Activated CD4-positive, alpha-beta memory T cell treated with anti-CD3 and anti-CD28 coated beads for 36 hours (primary cell): ENCODE measurements at regions of chr2 and their contacts with region 1.

Region 1: GRCh38 chr2:60806988-60807681 is 51.1 kb downstream of the PAPOLG start:
- DNase-seq: peak; percentile 81
- H3K4me3 Mint-ChIP-seq: peak overlapping the region; percentile 36
- H3K27ac Mint-ChIP-seq: peak overlapping the region; percentile 88
- H3K4me1 Mint-ChIP-seq: peaks cover 49% of the 10 kb centered on the region
- H3K27me3 Mint-ChIP-seq: no peaks in the 10 kb centered on the region

Region 2: GRCh38 chr2:60555066-60555782 is 251.9 kb before region 1 on chr2:
- CTCF ChIA-PET with region 1: no interaction called
- POLR2A ChIA-PET with region 1: no interaction called
- intact Hi-C with region 1: no loop called
- DNase-seq: peak; percentile 72
- H3K4me3 Mint-ChIP-seq: peak overlapping the region; percentile 70
- H3K27ac Mint-ChIP-seq: no peak overlapping the region
- H3K4me1 Mint-ChIP-seq: peaks cover 38% of the 10 kb centered on the region
- H3K27me3 Mint-ChIP-seq: peaks cover 51% of the 10 kb centered on the region

Region 3: GRCh38 chr2:60707750-60708371 is 99.3 kb before region 1 on chr2:
- CTCF ChIA-PET with region 1: no interaction called
- POLR2A ChIA-PET with region 1: no interaction called
- intact Hi-C with region 1: loop called (anchors 5 kb)
- DNase-seq: no peak
- H3K4me3 Mint-ChIP-seq: no peak overlapping the region
- H3K27ac Mint-ChIP-seq: no peak overlapping the region
- H3K4me1 Mint-ChIP-seq: no peaks in the 10 kb centered on the region
- H3K27me3 Mint-ChIP-seq: peaks cover 1% of the 10 kb centered on the region

Region 4: DNA sequence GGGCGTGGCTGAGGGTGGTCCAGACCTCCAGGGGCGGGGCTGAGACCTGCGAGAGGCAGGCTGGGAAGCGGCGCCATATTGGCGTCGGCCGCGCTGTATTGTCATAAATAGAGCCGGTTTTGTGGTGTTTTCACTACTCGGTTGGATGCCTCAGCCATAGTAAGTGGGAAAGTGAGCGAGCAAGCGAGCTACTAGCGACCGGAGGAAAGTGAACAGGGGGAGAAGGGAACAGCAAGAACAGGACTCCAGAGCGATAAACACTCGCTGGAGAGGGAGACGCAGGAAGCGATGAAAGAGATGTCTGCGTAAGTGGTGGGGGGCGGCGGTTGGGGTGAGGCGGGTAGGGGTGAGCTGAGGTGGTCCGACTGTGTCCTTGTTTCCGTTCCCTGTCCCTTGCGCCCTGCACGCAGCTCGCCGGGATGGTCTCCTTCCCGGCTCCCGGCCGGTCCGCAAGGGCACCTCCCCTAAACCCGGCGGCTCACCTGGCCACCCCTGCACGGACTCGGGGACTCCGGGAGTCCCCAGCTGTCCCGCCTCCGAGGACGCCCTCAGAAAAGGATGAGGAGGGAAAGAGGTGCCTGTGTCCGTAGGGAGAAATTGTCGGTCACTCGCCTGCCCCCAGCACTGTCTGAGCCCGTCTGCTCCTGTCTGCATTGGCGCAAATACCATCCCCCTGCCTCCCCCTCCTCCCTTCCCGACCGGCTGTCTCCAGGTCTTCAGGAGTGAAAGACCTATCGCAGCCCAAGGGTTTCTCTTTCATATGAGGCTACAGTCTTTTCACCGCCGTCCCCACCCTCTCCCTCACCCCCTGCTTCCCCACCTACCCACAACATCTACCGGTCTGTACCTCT is 50.7 kb before region 1 on chr2 and contains the start of gene PAPOLG:
- CTCF ChIA-PET with region 1: interaction called, 3 read pairs
- POLR2A ChIA-PET with region 1: interaction called, 3 read pairs
- intact Hi-C with region 1: loop called (anchors 5 kb)
- DNase-seq: peak; percentile 98
- H3K4me3 Mint-ChIP-seq: peak within 1 kb of the TSS; percentile 99
- H3K27ac Mint-ChIP-seq: peak within 1 kb of the TSS; percentile 96
- H3K4me1 Mint-ChIP-seq: peaks cover 39% of the 10 kb centered on the region
- H3K27me3 Mint-ChIP-seq: no peaks in the 10 kb centered on the region
- total RNA-seq, gene PAPOLG: 14.4 to 15.7 TPM

Region 5: DNA sequence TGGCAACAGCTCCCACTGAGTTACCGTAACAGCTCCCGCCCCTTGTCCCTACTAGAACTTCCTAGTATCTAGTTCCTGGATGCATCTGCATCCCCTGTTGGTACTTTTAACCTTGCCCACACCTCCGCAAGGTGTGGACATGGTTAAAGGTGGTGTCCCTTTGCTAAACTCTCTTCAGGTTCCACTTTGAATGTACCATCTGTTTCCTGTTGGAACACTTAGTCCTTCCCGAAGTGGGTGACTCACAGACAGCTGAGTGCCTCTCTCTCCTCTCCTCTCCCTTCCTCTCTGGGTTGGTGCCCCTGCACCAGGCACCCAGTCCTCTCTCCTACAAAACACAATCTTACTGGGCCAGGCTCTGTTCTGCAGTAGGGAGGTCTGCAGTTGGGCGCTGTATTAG is 54.6 kb after region 1 on chr2:
- CTCF ChIA-PET with region 1: no interaction called
- POLR2A ChIA-PET with region 1: no interaction called
- intact Hi-C with region 1: no loop called
- DNase-seq: no peak
- H3K4me3 Mint-ChIP-seq: no peak overlapping the region
- H3K27ac Mint-ChIP-seq: no peak overlapping the region
- H3K4me1 Mint-ChIP-seq: peaks cover 11% of the 10 kb centered on the region
- H3K27me3 Mint-ChIP-seq: peaks cover 9% of the 10 kb centered on the region

Region 6: DNA sequence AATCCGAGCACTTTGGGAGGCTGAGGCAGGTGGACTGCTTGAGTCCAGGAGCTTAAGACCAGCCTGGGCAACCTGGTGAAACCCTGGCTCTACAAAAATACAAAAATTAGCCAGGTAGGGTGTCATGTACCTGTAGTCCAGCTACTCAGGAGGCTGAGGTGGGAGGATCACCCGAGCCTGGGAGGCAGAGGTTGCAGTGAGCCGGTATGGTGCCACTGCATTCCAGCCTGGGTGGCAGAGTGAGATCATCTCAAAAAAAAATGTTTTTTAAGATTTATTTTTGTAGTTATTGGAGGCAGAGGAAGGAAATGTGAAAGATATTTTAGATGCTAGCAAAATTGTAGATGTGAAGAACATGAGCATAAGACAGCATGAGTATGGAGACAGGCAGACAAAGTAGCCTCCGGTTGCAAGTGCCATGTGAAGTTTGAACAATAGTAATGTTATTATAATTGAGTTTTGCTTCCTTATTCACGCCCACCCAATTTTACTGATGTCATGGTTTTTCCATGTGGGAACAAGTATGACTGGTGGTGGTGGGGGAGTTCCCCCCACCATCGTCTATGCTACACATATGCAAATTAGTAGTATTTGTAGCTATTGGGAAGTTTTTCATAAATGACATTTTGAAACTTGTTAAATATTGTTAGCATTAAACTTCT is 92.2 kb after region 1 on chr2:
- CTCF ChIA-PET with region 1: interaction called, 6 read pairs
- POLR2A ChIA-PET with region 1: interaction called, 6 read pairs
- intact Hi-C with region 1: loop called (anchors 1 kb)
- DNase-seq: peak; percentile 74
- H3K4me3 Mint-ChIP-seq: peak overlapping the region; percentile 43
- H3K27ac Mint-ChIP-seq: peak overlapping the region; percentile 85
- H3K4me1 Mint-ChIP-seq: peaks cover 31% of the 10 kb centered on the region
- H3K27me3 Mint-ChIP-seq: no peaks in the 10 kb centered on the region

Region 7: DNA sequence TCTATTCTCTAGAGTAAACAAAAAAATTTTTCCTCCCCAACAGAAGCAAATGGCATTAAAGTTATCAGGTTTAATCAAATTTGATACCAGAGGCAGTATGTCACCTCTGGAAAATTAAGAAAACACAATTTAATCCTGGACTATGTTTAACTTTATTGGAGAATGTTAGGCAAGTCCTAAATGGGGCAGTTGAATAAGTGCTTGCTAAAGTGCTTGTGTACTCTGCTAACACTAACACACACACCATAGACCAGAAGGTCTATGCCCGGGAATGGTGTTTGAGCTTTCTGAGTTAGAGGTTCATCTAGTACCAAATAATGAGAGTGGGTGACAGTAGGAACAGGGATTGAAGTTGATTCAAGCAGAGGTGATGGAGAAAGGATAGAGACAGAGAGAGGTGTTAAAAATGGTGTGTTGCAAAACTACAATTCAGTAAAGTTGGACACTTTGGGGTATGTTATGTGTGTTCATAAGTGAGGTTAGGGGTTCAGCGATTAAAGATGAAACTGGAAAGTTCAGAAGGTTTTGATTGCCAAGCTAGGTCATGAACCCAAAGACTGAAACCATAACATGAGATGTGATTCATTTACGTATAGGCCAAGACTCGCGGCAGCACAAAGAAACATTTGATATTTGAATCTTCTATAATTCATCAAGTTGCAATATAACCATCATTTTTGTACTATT is 169.9 kb after region 1 on chr2:
- CTCF ChIA-PET with region 1: interaction called, 3 read pairs
- POLR2A ChIA-PET with region 1: no interaction called
- intact Hi-C with region 1: loop called (anchors 2 kb)
- DNase-seq: peak; percentile 29
- H3K4me3 Mint-ChIP-seq: no peak overlapping the region
- H3K27ac Mint-ChIP-seq: peak overlapping the region; percentile 35
- H3K4me1 Mint-ChIP-seq: peaks cover 30% of the 10 kb centered on the region
- H3K27me3 Mint-ChIP-seq: no peaks in the 10 kb centered on the region